Ovary (tissue), 10 donors: ENCODE measurements at regions of chr2 and their contacts with region 1.

Region 1: GRCh38 chr2:27890146-27890923 is at the starts of genes BABAM2 and RBKS:
- DNase-seq: peak; percentile 87 to 94 (median 90)
- H3K4me3 ChIP-seq: peak within 1 kb of the TSS; percentile 87
- H3K27ac ChIP-seq: peak within 1 kb of the TSS; percentile 76 to 97
- H3K4me1 ChIP-seq: peaks cover 3% of the 10 kb centered on the region
- H3K27me3 ChIP-seq: peaks cover 3% of the 10 kb centered on the region
- CTCF ChIP-seq: peak in 2 of 3 donors; percentile 8 to 26
- EP300 ChIP-seq: peak; percentile 69
- POLR2A ChIP-seq: peak; percentile 85
- total RNA-seq, gene BABAM2: 24.2 to 51.3 (median 46.8) TPM
- total RNA-seq, gene RBKS: 1.9 to 32.9 (median 4.0) TPM

Region 2: GRCh38 chr2:27363933-27364332 is 526.4 kb before region 1 on chr2:
- intact Hi-C with region 1: no loop called
- DNase-seq: no peak
- H3K4me3 ChIP-seq: no peak overlapping the region
- H3K27ac ChIP-seq: no peak overlapping the region
- H3K4me1 ChIP-seq: peaks cover 6% of the 10 kb centered on the region
- H3K27me3 ChIP-seq: no peaks in the 10 kb centered on the region
- CTCF ChIP-seq: no peak
- EP300 ChIP-seq: no peak
- POLR2A ChIP-seq: no peak

Region 3: DNA sequence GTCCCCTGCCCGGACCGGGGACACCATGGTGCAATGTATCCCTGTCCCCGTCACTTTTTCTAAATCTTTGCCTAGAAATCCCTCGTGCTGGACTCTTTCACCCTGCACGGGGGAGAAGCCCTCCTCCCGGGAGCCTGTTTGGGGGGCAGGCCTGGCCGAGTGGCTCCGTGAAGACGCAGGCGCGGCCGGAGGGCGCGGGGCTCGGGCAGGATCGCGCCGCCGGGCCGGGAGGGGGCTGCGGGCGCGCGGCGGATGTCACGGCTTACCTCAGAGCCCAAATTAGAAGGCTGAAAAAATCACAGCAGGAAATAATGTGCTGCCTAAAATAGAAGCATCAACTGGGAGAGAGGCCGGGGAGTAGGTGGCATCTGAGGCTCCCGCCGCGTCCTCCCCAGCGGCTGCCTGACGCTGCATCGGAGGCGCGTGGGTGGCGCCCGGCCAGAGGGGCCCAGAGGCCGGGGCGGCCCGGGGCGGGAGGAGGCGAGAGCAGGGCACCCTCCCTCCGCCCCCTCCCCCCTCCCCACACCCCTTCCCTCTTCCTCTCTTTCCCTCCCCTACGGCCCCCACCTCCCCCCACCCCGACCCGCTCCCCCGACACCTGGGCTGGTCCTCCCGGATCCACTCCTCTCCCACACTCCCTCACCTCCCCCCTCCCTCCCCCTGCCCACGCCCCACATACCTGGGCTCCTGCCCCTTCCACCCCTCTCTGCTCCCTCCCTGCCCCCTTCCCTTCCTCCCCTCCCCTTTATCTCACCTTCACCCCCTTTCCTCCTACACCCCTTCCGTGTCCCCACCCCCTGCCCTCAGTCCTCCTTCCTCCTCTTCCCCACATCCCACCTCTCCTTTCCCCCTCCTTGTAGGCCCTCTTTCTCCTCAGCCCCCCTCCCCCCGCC is 174.8 kb before region 1 on chr2:
- intact Hi-C with region 1: loop called in 2 of 4 experiments (anchors 5 to 10 kb)
- DNase-seq: peak; percentile 70 to 85 (median 79)
- H3K4me3 ChIP-seq: peak overlapping the region; percentile 42
- H3K27ac ChIP-seq: peak overlapping the region; percentile 11 to 52
- H3K4me1 ChIP-seq: peaks cover 6% of the 10 kb centered on the region
- H3K27me3 ChIP-seq: no peaks in the 10 kb centered on the region
- CTCF ChIP-seq: no peak
- EP300 ChIP-seq: no peak
- POLR2A ChIP-seq: peak; percentile 45

Region 4: DNA sequence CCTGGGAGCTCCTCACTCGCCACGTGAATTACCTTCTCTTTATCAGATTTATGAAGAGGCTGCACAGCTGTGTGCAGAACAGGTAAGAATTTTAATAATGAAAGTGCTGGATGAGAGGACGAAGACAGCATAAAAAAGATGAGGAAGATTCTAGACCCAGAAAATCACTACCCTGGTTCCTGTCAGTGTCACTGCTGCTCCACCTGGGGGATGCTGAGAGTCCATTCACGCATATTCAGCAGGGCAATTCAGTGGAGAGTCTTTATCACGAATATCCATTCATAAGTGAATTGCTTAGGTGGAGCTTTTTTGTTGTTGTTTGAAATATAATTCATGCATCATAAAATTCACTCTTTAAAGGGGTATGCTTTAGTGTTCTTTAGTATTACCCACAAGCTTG is 66.8 kb before region 1 on chr2:
- intact Hi-C with region 1: no loop called
- DNase-seq: no peak
- H3K4me3 ChIP-seq: no peak overlapping the region
- H3K27ac ChIP-seq: no peak overlapping the region
- H3K4me1 ChIP-seq: no peaks in the 10 kb centered on the region
- H3K27me3 ChIP-seq: no peaks in the 10 kb centered on the region
- CTCF ChIP-seq: no peak
- EP300 ChIP-seq: no peak
- POLR2A ChIP-seq: no peak

Region 5: GRCh38 chr2:27954771-27955383 is 64.5 kb after region 1 on chr2:
- intact Hi-C with region 1: loop called in 1 of 4 experiments (anchors 10 kb)
- DNase-seq: peak in 2 of 5 donors; percentile 34 to 56
- H3K4me3 ChIP-seq: no peak overlapping the region
- H3K27ac ChIP-seq: peak overlapping the region in 1 of 2 donors; percentile 52
- H3K4me1 ChIP-seq: peaks cover 1% of the 10 kb centered on the region
- H3K27me3 ChIP-seq: no peaks in the 10 kb centered on the region
- CTCF ChIP-seq: peak in 2 of 3 donors; percentile 27 to 36
- EP300 ChIP-seq: no peak
- POLR2A ChIP-seq: no peak

Region 6: GRCh38 chr2:28870146-28870891 is 980.0 kb after region 1 on chr2 and contains the start of gene TRMT61B:
- intact Hi-C with region 1: no loop called
- DNase-seq: peak; percentile 94 to 98 (median 95)
- H3K4me3 ChIP-seq: peak within 1 kb of the TSS; percentile 88
- H3K27ac ChIP-seq: peak within 1 kb of the TSS; percentile 2 to 48
- H3K4me1 ChIP-seq: peaks cover 11% of the 10 kb centered on the region
- H3K27me3 ChIP-seq: no peaks in the 10 kb centered on the region
- CTCF ChIP-seq: peak in 1 of 3 donors; percentile 25
- EP300 ChIP-seq: no peak
- POLR2A ChIP-seq: peak; percentile 53
- total RNA-seq, gene TRMT61B: 8.1 to 18.4 (median 14.2) TPM